ENCODE measurements at regions of chr13 and their contacts with region 1.

Region 1: GRCh38 chr13:85806553-85807175 is 7.4 kb upstream of the SLITRK6 start:
- DNase-seq: peak in 1 of 3 donors; percentile 1
- H3K4me3 ChIP-seq: no peak overlapping the region
- H3K4me3 Mint-ChIP-seq: no peak overlapping the region
- H3K27ac ChIP-seq: no peak overlapping the region
- H3K27ac Mint-ChIP-seq: no peak overlapping the region
- H3K4me1 ChIP-seq: no peaks in the 10 kb centered on the region
- H3K4me1 Mint-ChIP-seq: no peaks in the 10 kb centered on the region
- H3K27me3 ChIP-seq: no peaks in the 10 kb centered on the region
- H3K27me3 Mint-ChIP-seq: no peaks in the 10 kb centered on the region
- CTCF ChIP-seq: peak; percentile 79

Region 2: DNA sequence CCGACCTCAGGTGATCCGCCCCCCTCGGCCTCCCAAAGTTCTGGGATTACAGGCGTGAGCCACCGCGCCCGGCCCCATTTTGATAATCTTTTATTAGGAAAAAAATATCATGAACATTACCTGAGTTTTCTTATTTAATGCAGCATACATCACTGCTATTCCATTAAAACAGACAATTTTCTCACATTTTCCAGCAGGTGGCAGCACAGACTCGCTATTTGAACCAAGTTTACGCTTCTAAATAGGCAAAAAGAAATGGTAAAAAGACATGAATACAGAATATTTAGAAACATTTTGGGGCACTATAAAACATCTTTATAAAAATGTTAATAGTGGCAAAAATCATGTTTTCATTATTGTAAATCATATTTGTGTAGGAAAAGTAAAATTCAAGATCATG is 910.5 kb before region 1 on chr13:
- intact Hi-C with region 1: loop called (anchors 10 kb)
- DNase-seq: peak in 2 of 3 donors; percentile 1 to 5
- H3K4me3 ChIP-seq: no peak overlapping the region
- H3K4me3 Mint-ChIP-seq: no peak overlapping the region
- H3K27ac ChIP-seq: no peak overlapping the region
- H3K27ac Mint-ChIP-seq: no peak overlapping the region
- H3K4me1 ChIP-seq: no peaks in the 10 kb centered on the region
- H3K4me1 Mint-ChIP-seq: no peaks in the 10 kb centered on the region
- H3K27me3 ChIP-seq: no peaks in the 10 kb centered on the region
- H3K27me3 Mint-ChIP-seq: peaks cover 0 to 3% (median 0%) of the 10 kb centered on the region in 3 donors
- CTCF ChIP-seq: peak; percentile 72

Region 3: GRCh38 chr13:85626603-85627002 is 180.1 kb before region 1 on chr13:
- intact Hi-C with region 1: no loop called
- DNase-seq: no peak
- H3K4me3 ChIP-seq: no peak overlapping the region
- H3K4me3 Mint-ChIP-seq: no peak overlapping the region
- H3K27ac ChIP-seq: no peak overlapping the region
- H3K27ac Mint-ChIP-seq: no peak overlapping the region
- H3K4me1 ChIP-seq: no peaks in the 10 kb centered on the region
- H3K4me1 Mint-ChIP-seq: no peaks in the 10 kb centered on the region
- H3K27me3 ChIP-seq: no peaks in the 10 kb centered on the region
- H3K27me3 Mint-ChIP-seq: no peaks in the 10 kb centered on the region
- CTCF ChIP-seq: no peak

Measured in CD14-positive monocyte (primary cell).